Caco-2 (cell line): ENCODE measurements at regions of chr22 and their contacts with region 1.

Region 1: DNA sequence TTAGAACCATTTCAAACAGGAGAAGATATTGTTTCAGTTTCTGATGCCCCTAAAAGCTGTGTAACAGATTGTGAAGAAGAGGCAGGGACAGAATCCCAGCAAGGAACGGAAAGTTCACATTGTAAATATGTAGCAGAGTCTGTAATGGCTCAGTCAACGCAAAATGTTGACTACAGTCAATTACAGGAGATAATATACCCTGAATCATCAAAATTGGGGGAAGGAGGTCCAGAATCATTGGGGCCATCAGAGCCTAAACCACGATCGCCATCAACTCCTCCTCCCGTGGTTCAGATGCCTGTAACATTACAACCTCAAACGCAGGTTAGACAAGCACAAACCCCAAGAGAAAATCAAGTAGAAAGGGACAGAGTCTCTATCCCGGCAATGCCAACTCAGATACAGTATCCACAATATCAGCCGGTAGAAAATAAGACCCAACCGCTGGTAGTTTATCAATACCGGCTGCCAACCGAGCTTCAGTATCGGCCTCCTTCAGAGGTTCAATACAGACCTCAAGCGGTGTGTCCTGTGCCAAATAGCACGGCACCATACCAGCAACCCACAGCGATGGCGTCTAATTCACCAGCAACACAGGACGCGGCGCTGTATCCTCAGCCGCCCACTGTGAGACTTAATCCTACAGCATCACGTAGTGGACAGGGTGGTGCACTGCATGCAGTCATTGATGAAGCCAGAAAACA is 40.8 kb downstream of the IGLL1 start:
- DNase-seq: peak; percentile 72 to 74
- H3K4me3 ChIP-seq: no peak overlapping the region
- H3K4me3 Mint-ChIP-seq: no peak overlapping the region
- H3K27ac Mint-ChIP-seq: no peak overlapping the region
- H3K4me1 ChIP-seq: peaks cover 50% of the 10 kb centered on the region
- H3K4me1 Mint-ChIP-seq: peaks cover 46% of the 10 kb centered on the region
- H3K27me3 ChIP-seq: no peaks in the 10 kb centered on the region
- H3K27me3 Mint-ChIP-seq: no peaks in the 10 kb centered on the region
- CTCF ChIP-seq: peak; percentile 81 to 83

Region 2: GRCh38 chr22:23402275-23403151 is 136.8 kb before region 1 on chr22:
- CTCF ChIA-PET with region 1: no interaction called
- POLR2A ChIA-PET with region 1: no interaction called
- intact Hi-C with region 1: loop called (anchors 1 kb)
- DNase-seq: peak; percentile 89 to 93
- H3K4me3 ChIP-seq: peak overlapping the region; percentile 51
- H3K4me3 Mint-ChIP-seq: peak overlapping the region; percentile 70
- H3K27ac Mint-ChIP-seq: no peak overlapping the region
- H3K4me1 ChIP-seq: peaks cover 5% of the 10 kb centered on the region
- H3K4me1 Mint-ChIP-seq: no peaks in the 10 kb centered on the region
- H3K27me3 ChIP-seq: no peaks in the 10 kb centered on the region
- H3K27me3 Mint-ChIP-seq: no peaks in the 10 kb centered on the region
- CTCF ChIP-seq: peak; percentile 84 to 86

Region 3: DNA sequence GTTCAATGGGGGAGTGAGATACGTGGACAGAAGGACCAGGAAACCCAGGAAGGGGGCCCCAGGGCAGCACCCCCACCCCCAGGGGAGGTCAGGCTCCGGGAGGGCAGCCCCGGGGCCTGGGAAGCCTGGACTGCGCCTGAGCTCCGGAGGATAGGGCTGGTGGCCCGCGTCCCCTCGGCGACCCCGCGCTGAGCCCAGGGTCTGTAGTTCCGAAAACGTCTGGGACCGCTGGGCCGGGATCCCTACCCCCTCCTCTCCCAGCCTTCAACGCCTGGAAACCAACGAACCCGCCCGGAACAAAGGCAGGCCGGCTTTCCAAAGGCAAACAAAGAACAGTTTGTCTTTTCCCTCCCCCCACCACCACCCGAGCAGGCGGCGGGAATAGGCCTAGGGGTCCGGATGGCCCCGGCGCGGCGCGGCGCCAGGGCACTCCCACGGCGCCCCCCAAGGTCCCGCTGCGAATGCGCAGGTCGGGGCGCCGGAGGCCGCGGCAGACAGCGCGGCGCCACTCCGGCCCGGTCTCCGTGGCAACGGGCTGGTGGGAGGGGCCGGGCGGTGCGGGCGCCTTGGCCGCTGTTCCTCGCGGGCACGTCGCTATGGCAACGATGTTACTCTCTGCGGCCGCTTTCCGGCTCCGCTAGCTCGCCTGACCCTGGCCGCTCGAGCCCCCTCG is 17.7 kb before region 1 on chr22:
- CTCF ChIA-PET with region 1: no interaction called
- POLR2A ChIA-PET with region 1: no interaction called
- intact Hi-C with region 1: loop called (anchors 1 kb)
- DNase-seq: peak; percentile 94 to 95
- H3K4me3 ChIP-seq: peak overlapping the region; percentile 34
- H3K4me3 Mint-ChIP-seq: peak overlapping the region; percentile 79
- H3K27ac Mint-ChIP-seq: peak overlapping the region; percentile 95
- H3K4me1 ChIP-seq: peaks cover 47% of the 10 kb centered on the region
- H3K4me1 Mint-ChIP-seq: peaks cover 17% of the 10 kb centered on the region
- H3K27me3 ChIP-seq: no peaks in the 10 kb centered on the region
- H3K27me3 Mint-ChIP-seq: no peaks in the 10 kb centered on the region
- CTCF ChIP-seq: peak; percentile 26 to 27

Region 4: DNA sequence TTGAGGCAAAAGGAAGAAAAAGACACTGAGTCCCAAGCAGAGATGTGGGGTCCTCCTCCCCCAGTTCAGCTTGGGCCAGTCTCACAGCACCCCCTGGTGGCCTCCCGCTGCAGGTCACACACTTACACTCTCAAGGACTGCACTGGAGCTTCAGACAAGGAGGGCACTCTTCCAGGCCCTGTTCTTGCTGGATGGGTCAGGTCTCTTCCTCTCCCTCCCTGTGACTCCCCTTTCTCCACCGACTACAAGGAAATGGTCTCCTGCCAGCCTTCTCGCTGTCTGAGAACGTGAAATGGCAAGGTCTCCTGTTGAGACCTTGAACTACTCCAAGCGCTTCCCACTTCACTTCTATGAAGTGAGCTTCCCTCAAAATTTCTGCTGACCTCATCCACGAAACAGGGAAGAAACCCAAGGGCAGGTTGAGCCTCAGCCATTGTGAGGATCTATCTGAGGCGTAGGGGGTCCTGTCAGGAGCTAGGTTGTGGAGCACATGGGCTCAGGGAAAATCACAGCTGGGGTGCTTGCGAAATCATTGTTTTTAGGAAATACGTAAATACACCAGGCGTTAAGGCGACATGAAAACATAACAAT is 52.0 kb after region 1 on chr22:
- CTCF ChIA-PET with region 1: interaction called, 3 read pairs
- POLR2A ChIA-PET with region 1: no interaction called
- intact Hi-C with region 1: loop called (anchors 1 kb)
- DNase-seq: peak; percentile 63 to 76
- H3K4me3 ChIP-seq: no peak overlapping the region
- H3K4me3 Mint-ChIP-seq: no peak overlapping the region
- H3K27ac Mint-ChIP-seq: no peak overlapping the region
- H3K4me1 ChIP-seq: no peaks in the 10 kb centered on the region
- H3K4me1 Mint-ChIP-seq: peaks cover 6% of the 10 kb centered on the region
- H3K27me3 ChIP-seq: no peaks in the 10 kb centered on the region
- H3K27me3 Mint-ChIP-seq: no peaks in the 10 kb centered on the region
- CTCF ChIP-seq: peak; percentile 93 to 96

Region 5: GRCh38 chr22:23849009-23850006 is 310.0 kb after region 1 on chr22:
- CTCF ChIA-PET with region 1: no interaction called
- POLR2A ChIA-PET with region 1: no interaction called
- intact Hi-C with region 1: loop called (anchors 5 kb)
- DNase-seq: peak; percentile 85 to 95
- H3K4me3 ChIP-seq: no peak overlapping the region
- H3K4me3 Mint-ChIP-seq: peak overlapping the region; percentile 40
- H3K27ac Mint-ChIP-seq: no peak overlapping the region
- H3K4me1 ChIP-seq: peaks cover 8% of the 10 kb centered on the region
- H3K4me1 Mint-ChIP-seq: no peaks in the 10 kb centered on the region
- H3K27me3 ChIP-seq: no peaks in the 10 kb centered on the region
- H3K27me3 Mint-ChIP-seq: no peaks in the 10 kb centered on the region
- CTCF ChIP-seq: peak; percentile 92 to 96